ENCODE measurements at regions of chr11 and their contacts with region 1.

Region 1: DNA sequence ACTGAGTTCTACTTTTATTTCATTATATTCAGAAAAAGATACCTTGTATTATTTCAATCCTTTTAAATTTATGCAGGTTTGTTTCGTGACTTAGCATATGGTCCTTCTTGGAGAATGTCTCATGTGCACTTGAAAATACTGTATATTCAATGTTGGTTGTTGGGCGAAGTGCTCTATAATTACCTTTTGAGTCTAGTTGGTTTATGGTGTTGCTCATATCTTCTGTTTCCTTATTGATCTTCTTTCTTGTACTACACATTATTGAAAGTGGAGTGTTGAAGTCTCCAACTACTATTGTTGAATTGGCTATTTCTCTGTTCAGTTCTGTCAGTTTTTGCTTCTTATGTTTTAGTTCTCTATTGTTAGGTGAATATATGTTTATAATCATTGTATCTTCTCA is 90.4 kb downstream of the KCNQ1OT1 start:
- DNase-seq: no peak

Region 2: DNA sequence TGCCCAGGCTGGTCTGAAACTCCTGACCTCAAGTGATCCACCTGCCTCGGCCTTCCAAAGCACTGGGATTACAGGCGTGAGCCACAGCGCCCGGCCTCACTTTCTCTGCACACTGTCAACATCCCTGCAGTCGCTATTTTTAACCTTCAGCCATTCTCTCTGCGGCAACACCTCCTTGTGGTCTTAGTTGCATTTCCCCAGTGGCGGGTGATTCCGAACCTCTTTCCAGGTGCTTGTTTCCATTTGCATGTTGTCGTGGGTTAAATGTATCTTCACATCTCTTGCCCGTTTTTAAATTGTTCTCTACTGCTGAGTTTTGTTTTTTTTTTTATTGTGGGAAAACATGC is 1980.1 kb before region 1 on chr11:
- intact Hi-C with region 1: no loop called
- DNase-seq: no peak

Region 3: GRCh38 chr11:2555336-2556290 is 53.7 kb before region 1 on chr11:
- intact Hi-C with region 1: loop called in 1 of 2 experiments (anchors 2 kb)
- DNase-seq: peak; percentile 74